ENCODE measurements at regions of chr20 and their contacts with region 1.

Region 1: DNA sequence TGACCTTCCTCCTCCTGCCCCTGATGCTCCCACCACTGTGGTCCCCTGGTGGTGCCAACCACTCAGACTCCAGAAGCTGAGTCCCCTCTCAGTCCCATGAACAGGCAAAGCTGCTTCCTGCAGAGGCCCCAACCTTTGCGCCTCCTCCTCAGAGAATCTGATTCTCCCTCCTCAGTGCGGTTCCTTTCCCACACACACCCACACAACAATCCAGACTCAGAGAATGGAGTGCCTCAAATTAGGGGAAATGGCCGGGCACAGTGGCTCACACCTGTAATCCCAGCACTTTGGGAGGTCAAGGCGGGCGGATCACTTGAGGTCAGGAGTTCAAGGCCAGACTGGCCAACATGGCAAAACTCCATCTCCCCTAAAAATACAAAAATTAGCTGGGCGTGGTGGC is 23.0 kb downstream of the RIPOR3 start:
- DNase-seq: no peak
- ATAC-seq: no peak
- H3K4me3 ChIP-seq: no peak overlapping the region
- H3K27ac ChIP-seq: no peak overlapping the region
- H3K4me1 ChIP-seq: peaks cover 23% of the 10 kb centered on the region
- H3K27me3 ChIP-seq: no peaks in the 10 kb centered on the region
- CTCF ChIP-seq: no peak
- POLR2A ChIP-seq: no peak

Region 2: DNA sequence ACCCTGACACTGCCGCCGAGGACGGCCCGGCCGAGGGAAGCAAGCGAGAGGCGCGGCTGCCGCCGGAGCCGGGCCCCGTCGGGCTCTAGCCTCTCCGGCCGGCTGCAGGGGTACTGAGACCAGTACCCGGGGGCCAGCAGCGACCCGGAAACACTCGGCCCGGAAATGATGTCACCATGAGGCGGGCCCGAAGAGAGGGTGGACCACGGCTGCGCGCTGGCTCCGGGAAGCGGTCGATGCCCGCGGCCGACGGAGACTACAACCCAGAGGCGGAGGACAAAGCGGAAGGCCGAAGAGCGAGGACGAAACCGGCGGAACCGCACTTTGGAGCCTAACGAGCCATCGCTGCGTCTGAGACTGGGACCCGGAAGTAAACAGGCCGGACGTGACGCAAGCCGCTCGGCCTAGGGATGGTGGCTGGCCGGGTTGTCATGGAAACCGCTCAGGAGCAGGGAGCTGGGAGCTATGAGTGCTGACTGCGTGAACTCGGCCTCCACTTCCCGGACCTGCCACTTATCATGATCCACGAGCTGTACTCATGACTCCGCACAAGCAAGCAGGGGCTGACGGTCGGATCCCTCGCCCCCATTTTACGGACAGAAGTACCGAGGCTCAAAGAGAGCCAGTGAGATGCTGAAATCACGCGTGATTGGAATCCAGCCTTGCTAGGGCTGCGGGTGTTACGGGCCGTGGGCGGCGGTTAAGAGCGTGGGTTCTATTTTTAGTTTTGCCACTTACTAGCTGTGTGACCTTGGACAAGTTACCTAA is 752.8 kb before region 1 on chr20 and contains the start of gene SPATA2:
- intact Hi-C with region 1: no loop called
- DNase-seq: peak; percentile 97 to 99 (median 98)
- ATAC-seq: peak; percentile 87
- H3K4me3 ChIP-seq: peak within 1 kb of the TSS; percentile 86 to 99
- H3K27ac ChIP-seq: peak within 1 kb of the TSS; percentile 96 to 99 (median 97)
- H3K4me1 ChIP-seq: peaks cover 42% of the 10 kb centered on the region
- H3K27me3 ChIP-seq: no peaks in the 10 kb centered on the region
- CTCF ChIP-seq: no peak
- POLR2A ChIP-seq: peak; percentile 56 to 86 (median 83)
- total RNA-seq, gene SPATA2: 3.9 to 7.3 TPM

Region 3: GRCh38 chr20:50713657-50714101 is 45.4 kb after region 1 on chr20:
- intact Hi-C with region 1: loop called (anchors 5 kb)
- DNase-seq: peak; percentile 58 to 70 (median 65)
- ATAC-seq: peak; percentile 68
- H3K4me3 ChIP-seq: no peak overlapping the region
- H3K27ac ChIP-seq: no peak overlapping the region
- H3K4me1 ChIP-seq: peaks cover 24% of the 10 kb centered on the region
- H3K27me3 ChIP-seq: no peaks in the 10 kb centered on the region
- CTCF ChIP-seq: peak; percentile 18 to 70 (median 52)
- POLR2A ChIP-seq: no peak